OCI-LY7 (cell line): ENCODE measurements at regions of chr12 and their contacts with region 1.

Region 1: GRCh38 chr12:111024205-111024801 is 103.9 kb upstream of the MYL2 start:
- DNase-seq: peak; percentile 74
- H3K4me3 ChIP-seq: no peak overlapping the region
- H3K27ac ChIP-seq: no peak overlapping the region
- H3K4me1 ChIP-seq: no peaks in the 10 kb centered on the region
- CTCF ChIP-seq: peak; percentile 95

Region 2: DNA sequence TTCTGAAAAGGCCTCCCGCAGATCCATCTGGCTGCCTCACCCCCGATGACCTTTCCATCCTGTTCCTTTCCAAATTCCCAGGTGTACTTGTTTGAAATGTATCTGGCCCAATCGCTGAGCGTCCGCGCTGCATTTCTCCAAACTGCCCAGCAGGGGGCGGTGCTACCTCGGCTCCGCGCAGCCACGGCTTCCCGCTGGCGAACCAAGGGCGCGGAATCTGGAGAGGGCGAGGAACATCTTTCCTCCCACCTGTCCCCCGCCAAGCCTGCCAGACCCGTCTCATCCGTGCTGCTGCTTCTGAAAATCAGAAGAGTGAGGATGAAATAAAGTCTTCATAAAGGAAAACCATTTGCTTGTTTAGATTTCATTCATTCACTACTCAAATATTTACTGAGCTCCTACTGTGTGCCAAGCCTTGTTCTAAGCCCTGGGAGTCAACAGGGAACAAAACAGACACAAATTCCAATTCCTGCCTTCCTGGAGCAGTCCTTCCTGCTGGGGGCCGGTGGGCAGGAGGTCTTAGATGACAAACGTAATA is 87.1 kb before region 1 on chr12:
- CTCF ChIA-PET with region 1: no interaction called
- POLR2A ChIA-PET with region 1: no interaction called
- intact Hi-C with region 1: loop called (anchors 5 kb)
- DNase-seq: peak; percentile 62
- H3K4me3 ChIP-seq: no peak overlapping the region
- H3K27ac ChIP-seq: no peak overlapping the region
- H3K4me1 ChIP-seq: no peaks in the 10 kb centered on the region
- CTCF ChIP-seq: peak; percentile 99

Region 3: GRCh38 chr12:111102062-111102739 is 77.9 kb after region 1 on chr12:
- CTCF ChIA-PET with region 1: interaction called, 3 read pairs
- POLR2A ChIA-PET with region 1: no interaction called
- intact Hi-C with region 1: loop called (anchors 2 kb)
- DNase-seq: peak; percentile 62
- H3K4me3 ChIP-seq: peak overlapping the region; percentile 71
- H3K27ac ChIP-seq: peak overlapping the region; percentile 68
- H3K4me1 ChIP-seq: peaks cover 50% of the 10 kb centered on the region
- CTCF ChIP-seq: no peak

Region 4: GRCh38 chr12:111271674-111272418 is 247.5 kb after region 1 on chr12:
- CTCF ChIA-PET with region 1: no interaction called
- POLR2A ChIA-PET with region 1: no interaction called
- intact Hi-C with region 1: loop called (anchors 2 kb)
- DNase-seq: peak; percentile 40
- H3K4me3 ChIP-seq: no peak overlapping the region
- H3K27ac ChIP-seq: no peak overlapping the region
- H3K4me1 ChIP-seq: no peaks in the 10 kb centered on the region
- CTCF ChIP-seq: peak; percentile 78

Region 5: GRCh38 chr12:111313833-111314259 is 289.5 kb after region 1 on chr12:
- CTCF ChIA-PET with region 1: no interaction called
- POLR2A ChIA-PET with region 1: no interaction called
- intact Hi-C with region 1: loop called (anchors 5 kb)
- DNase-seq: peak; percentile 63
- H3K4me3 ChIP-seq: no peak overlapping the region
- H3K27ac ChIP-seq: no peak overlapping the region
- H3K4me1 ChIP-seq: no peaks in the 10 kb centered on the region
- CTCF ChIP-seq: peak; percentile 97

Region 6: GRCh38 chr12:111643427-111643826 is 619.1 kb after region 1 on chr12:
- CTCF ChIA-PET with region 1: no interaction called
- POLR2A ChIA-PET with region 1: no interaction called
- intact Hi-C with region 1: no loop called
- DNase-seq: no peak
- H3K4me3 ChIP-seq: no peak overlapping the region
- H3K27ac ChIP-seq: no peak overlapping the region
- H3K4me1 ChIP-seq: no peaks in the 10 kb centered on the region
- CTCF ChIP-seq: no peak